K562 (cell line): ENCODE measurements at regions of chr3 and their contacts with region 1.

Region 1: GRCh38 chr3:168213920-168214319 is 118.2 kb upstream of the GOLIM4 start:
- DNase-seq: no peak
- ATAC-seq: no peak; the same call in 2 of the 3 replicates
- H3K4me3 ChIP-seq: no peak overlapping the region
- H3K27ac ChIP-seq: no peak overlapping the region
- H3K4me1 ChIP-seq: no peaks in the 10 kb centered on the region
- H3K27me3 ChIP-seq: no peaks in the 10 kb centered on the region; a peak in 1 of 5 replicates
- CTCF ChIP-seq: no peak
- EP300 ChIP-seq: no peak
- POLR2A ChIP-seq: no peak
- RAD21 ChIP-seq: no peak

Region 2: DNA sequence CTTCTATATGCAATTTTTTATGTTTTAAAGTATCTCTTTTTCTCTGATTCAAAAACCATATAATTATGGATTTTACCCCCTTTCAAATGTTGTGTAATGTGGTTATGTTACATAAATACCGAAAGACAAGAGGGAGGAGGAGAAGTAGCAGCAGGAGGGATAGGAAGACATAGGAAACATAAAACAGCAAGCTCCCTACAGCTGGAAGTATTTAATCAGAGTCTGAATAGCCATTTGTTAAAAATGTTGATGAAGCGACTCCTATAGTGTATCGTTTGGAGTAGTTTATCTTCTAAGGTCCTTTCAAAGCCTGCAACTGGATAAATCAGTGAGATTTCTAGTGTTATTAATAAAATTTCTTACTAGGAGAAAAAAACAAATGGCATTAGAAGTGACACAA is 479.9 kb after region 1 on chr3:
- CTCF ChIA-PET with region 1: no interaction called
- POLR2A ChIA-PET with region 1: no interaction called
- in situ Hi-C with region 1: no loop called
- intact Hi-C with region 1: loop called (anchors 10 kb)
- DNase-seq: no peak
- ATAC-seq: no peak
- H3K4me3 ChIP-seq: no peak overlapping the region
- H3K27ac ChIP-seq: no peak overlapping the region
- H3K4me1 ChIP-seq: no peaks in the 10 kb centered on the region
- H3K27me3 ChIP-seq: no peaks in the 10 kb centered on the region
- CTCF ChIP-seq: no peak
- EP300 ChIP-seq: no peak
- POLR2A ChIP-seq: no peak
- RAD21 ChIP-seq: no peak

Region 3: DNA sequence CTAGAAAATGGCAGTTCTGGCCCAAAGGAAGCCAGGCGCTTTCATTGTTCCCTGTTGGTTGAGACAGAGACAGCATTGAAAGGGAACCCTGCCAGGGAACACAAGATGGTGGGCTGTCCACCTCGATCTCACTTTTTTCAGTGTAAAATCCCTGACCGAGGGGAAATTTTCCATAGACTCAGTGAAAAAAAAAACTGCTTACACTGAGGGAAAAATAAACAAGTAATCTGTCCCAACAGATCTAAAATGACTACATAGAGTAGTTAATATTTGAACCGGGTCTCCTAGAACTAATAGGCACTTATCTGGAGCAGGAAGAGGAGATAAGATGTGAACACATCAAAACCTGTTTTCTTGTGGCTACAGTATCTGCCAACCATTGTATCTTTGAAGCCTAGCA is 645.2 kb after region 1 on chr3:
- CTCF ChIA-PET with region 1: no interaction called
- POLR2A ChIA-PET with region 1: no interaction called
- in situ Hi-C with region 1: loop called (anchors 10 kb)
- intact Hi-C with region 1: no loop called
- DNase-seq: no peak
- ATAC-seq: no peak
- H3K4me3 ChIP-seq: no peak overlapping the region
- H3K27ac ChIP-seq: no peak overlapping the region
- H3K4me1 ChIP-seq: no peaks in the 10 kb centered on the region
- H3K27me3 ChIP-seq: no peaks in the 10 kb centered on the region
- CTCF ChIP-seq: no peak
- EP300 ChIP-seq: no peak
- POLR2A ChIP-seq: no peak
- RAD21 ChIP-seq: no peak